Left colon (tissue), 2 donors: ENCODE measurements at regions of chr10 and their contacts with region 1.

Region 1: DNA sequence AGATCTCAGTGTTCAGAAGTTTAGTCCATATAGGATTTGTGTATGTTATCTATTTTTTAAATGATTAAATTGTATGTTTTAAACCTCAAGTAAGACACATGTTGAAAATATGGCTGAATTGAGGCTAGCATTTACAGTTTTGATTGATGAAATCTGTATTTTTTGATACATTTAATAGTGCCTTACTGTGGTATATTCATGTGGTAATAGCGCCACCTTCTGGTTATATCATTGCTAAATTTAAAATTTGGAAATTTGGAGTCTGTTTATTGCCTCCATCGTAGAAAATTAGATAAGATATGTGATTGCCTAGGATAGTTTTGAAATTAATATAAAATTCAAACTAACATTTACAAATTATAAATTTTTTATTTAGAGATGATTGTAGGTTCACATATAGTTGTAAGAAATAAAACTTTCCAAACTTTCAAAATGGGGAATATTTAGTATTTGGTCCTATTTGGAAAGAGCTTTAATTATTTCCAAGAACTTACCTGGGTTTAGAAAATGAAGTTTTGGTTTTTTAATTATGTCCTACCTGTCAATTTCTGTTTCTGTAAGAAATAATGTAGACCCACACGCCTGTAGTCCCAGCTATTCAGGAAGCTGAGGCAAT is 19.1 kb upstream of the ARMS2 start:
- DNase-seq: no peak
- ATAC-seq: peak; percentile 45

Region 2: GRCh38 chr10:122298598-122299301 is 136.6 kb before region 1 on chr10:
- intact Hi-C with region 1: loop called (anchors 2 to 10 kb)
- DNase-seq: peak; percentile 48 to 76
- ATAC-seq: peak; percentile 94

Region 3: GRCh38 chr10:122342293-122343134 is 92.8 kb before region 1 on chr10:
- intact Hi-C with region 1: loop called in 1 of 2 experiments (anchors 2 kb)
- DNase-seq: peak in 1 of 2 donors; percentile 38
- ATAC-seq: no peak